Natural killer cell (primary cell): ENCODE measurements at regions of chr4 and their contacts with region 1.

Region 1: DNA sequence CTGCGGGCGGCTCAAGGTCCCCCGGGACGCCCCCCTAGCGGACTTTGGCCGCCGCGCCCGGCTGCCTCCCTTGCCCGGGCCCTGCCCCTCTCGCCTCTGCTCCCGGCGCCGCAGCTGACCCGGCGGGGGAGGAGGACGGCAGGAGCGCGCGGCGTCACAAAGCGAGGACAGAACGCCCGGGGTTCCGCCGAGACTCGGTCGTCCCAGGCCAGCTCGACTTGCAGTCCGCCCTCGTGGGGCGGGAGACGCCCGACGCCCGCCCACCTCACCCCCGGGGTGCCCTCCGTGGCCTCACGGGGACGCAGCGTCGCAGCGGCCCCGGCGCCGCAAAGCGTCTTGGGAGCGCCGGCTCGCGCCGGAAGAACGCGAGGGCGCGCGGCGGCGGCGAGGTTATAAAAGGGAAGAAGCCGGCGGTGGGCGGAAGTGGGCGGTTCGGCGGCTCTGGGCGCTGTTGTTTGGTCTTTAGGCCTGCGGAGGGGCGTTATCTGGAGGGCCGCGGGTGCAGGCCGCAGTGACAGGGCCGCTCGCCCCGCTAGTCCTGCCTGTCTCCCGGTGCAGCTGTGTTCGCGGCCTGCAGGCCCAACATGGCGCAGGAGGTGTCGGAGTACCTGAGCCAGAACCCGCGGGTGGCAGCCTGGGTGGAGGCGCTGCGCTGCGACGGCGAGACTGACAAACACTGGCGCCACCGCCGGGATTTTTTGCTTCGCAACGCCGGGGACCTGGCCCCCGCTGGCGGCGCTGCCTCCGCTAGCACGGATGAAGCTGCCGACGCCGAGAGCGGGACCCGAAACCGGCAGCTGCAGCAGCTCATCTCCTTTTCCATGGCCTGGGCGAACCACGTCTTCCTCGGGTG is at the start of gene CDKN2AIP:
- DNase-seq: peak; percentile 93 to 96
- ATAC-seq: peak; percentile 85 to 94 (median 87)
- H3K4me3 ChIP-seq: peak within 1 kb of the TSS; percentile 60
- H3K4me3 Mint-ChIP-seq: peak within 1 kb of the TSS; percentile 95
- H3K27ac ChIP-seq: peak within 1 kb of the TSS; percentile 87
- H3K27ac Mint-ChIP-seq: peak within 1 kb of the TSS; percentile 95 to 96
- H3K4me1 ChIP-seq: peaks cover 16% of the 10 kb centered on the region
- H3K4me1 Mint-ChIP-seq: peaks cover 43 to 48% of the 10 kb centered on the region in 2 donors
- H3K27me3 ChIP-seq: no peaks in the 10 kb centered on the region
- H3K27me3 Mint-ChIP-seq: no peaks in the 10 kb centered on the region
- CTCF ChIP-seq: no peak
- total RNA-seq, gene CDKN2AIP: 24.2 to 27.3 (median 25.7) TPM

Region 2: GRCh38 chr4:183098723-183099536 is 345.5 kb before region 1 on chr4 and contains the start of gene WWC2:
- intact Hi-C with region 1: loop called (anchors 2 kb)
- DNase-seq: peak; percentile 52 to 80
- ATAC-seq: peak; percentile 64 to 72 (median 72)
- H3K4me3 ChIP-seq: peak within 1 kb of the TSS; percentile 74
- H3K4me3 Mint-ChIP-seq: peak within 1 kb of the TSS; percentile 84
- H3K27ac ChIP-seq: peak within 1 kb of the TSS; percentile 42
- H3K27ac Mint-ChIP-seq: peak within 1 kb of the TSS; percentile 57 to 87
- H3K4me1 ChIP-seq: peaks cover 16% of the 10 kb centered on the region
- H3K4me1 Mint-ChIP-seq: peaks cover 12 to 13% of the 10 kb centered on the region in 2 donors
- H3K27me3 ChIP-seq: peaks cover 3% of the 10 kb centered on the region
- H3K27me3 Mint-ChIP-seq: peaks cover 8 to 15% of the 10 kb centered on the region in 2 donors
- CTCF ChIP-seq: no peak
- total RNA-seq, gene WWC2: 8.2 to 22.7 (median 9.2) TPM

Region 3: DNA sequence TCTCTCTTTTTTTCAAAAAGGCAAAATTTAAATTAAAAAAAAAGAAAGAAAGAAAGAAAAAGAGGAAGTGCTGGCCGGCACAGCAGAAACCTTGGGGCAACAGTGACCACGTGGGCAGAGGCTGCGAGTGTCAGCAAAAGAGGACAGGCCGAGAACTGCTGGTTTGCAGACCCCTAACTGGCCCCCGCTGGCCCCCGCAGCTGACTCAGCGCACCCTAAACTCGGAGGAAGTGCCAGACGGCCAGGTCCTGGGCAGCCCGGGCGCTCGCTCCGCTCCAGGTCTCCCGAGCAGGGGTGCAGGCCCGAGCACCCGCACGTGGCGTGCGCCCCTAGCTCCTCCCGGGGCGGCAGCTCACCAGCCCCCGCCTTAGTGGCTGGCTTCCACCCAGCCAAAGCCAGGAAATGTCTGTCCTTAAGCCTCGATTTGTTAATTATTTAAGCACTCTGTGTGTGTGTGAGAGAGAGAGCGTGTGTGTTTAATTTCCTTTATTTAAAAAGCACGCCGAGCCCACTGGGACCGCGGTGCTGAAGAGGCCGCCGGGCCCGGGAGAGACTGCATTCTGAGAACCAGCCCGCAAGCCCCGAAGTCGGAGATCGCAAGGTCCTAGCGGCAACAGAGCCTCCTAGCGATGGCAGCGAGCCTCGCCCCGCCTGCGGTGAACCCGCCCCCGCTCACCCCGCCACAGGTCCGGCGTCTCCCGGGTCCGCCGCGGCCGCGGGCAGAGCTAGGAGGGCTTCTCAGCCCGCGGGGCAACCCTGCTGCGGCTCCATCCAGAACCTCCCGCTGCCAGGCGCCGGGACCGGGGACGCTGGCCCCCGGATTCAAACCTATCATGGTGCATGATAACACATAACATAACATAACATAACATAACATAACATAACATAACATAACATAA is 46.0 kb before region 1 on chr4:
- intact Hi-C with region 1: no loop called
- DNase-seq: peak; percentile 52 to 79
- ATAC-seq: peak; percentile 83 to 94 (median 92)
- H3K4me3 ChIP-seq: peak overlapping the region; percentile 56
- H3K4me3 Mint-ChIP-seq: peak overlapping the region; percentile 92
- H3K27ac ChIP-seq: peak overlapping the region; percentile 17
- H3K27ac Mint-ChIP-seq: peak overlapping the region in 1 of 2 donors; percentile 86
- H3K4me1 ChIP-seq: peaks cover 15% of the 10 kb centered on the region
- H3K4me1 Mint-ChIP-seq: peaks cover 24 to 28% of the 10 kb centered on the region in 2 donors
- H3K27me3 ChIP-seq: peaks cover 4% of the 10 kb centered on the region
- H3K27me3 Mint-ChIP-seq: peaks cover 30 to 48% of the 10 kb centered on the region in 2 donors
- CTCF ChIP-seq: peak; percentile 37

Region 4: GRCh38 chr4:183504064-183504929 is 59.9 kb after region 1 on chr4:
- intact Hi-C with region 1: loop called (anchors 1 kb)
- DNase-seq: peak; percentile 98 to 100
- ATAC-seq: peak; percentile 79 to 95 (median 84)
- H3K4me3 ChIP-seq: peak overlapping the region; percentile 85
- H3K4me3 Mint-ChIP-seq: peak overlapping the region; percentile 93
- H3K27ac ChIP-seq: peak overlapping the region; percentile 90
- H3K27ac Mint-ChIP-seq: peak overlapping the region; percentile 88 to 92
- H3K4me1 ChIP-seq: peaks cover 3% of the 10 kb centered on the region
- H3K4me1 Mint-ChIP-seq: peaks cover 13 to 20% of the 10 kb centered on the region in 2 donors
- H3K27me3 ChIP-seq: no peaks in the 10 kb centered on the region
- H3K27me3 Mint-ChIP-seq: no peaks in the 10 kb centered on the region
- CTCF ChIP-seq: no peak

Region 5: GRCh38 chr4:183659029-183659871 is 214.8 kb after region 1 on chr4 and contains the starts of genes RWDD4 and TRAPPC11:
- intact Hi-C with region 1: loop called (anchors 1 kb)
- DNase-seq: peak; percentile 95 to 98
- ATAC-seq: peak; percentile 95 to 99 (median 96)
- H3K4me3 ChIP-seq: peak within 1 kb of the TSS; percentile 63
- H3K4me3 Mint-ChIP-seq: peak within 1 kb of the TSS; percentile 87
- H3K27ac ChIP-seq: peak within 1 kb of the TSS; percentile 85
- H3K27ac Mint-ChIP-seq: peak within 1 kb of the TSS; percentile 88 to 89
- H3K4me1 ChIP-seq: peaks cover 15% of the 10 kb centered on the region
- H3K4me1 Mint-ChIP-seq: peaks cover 34 to 37% of the 10 kb centered on the region in 2 donors
- H3K27me3 ChIP-seq: no peaks in the 10 kb centered on the region
- H3K27me3 Mint-ChIP-seq: no peaks in the 10 kb centered on the region
- CTCF ChIP-seq: no peak
- total RNA-seq, gene RWDD4: 14.3 to 20.7 (median 17.6) TPM
- total RNA-seq, gene TRAPPC11: 33.4 to 41.7 (median 36.8) TPM

Region 6: GRCh38 chr4:184136525-184136924 is 692.1 kb after region 1 on chr4:
- intact Hi-C with region 1: no loop called
- DNase-seq: no peak
- ATAC-seq: no peak
- H3K4me3 ChIP-seq: no peak overlapping the region
- H3K4me3 Mint-ChIP-seq: no peak overlapping the region
- H3K27ac ChIP-seq: no peak overlapping the region
- H3K27ac Mint-ChIP-seq: no peak overlapping the region
- H3K4me1 ChIP-seq: no peaks in the 10 kb centered on the region
- H3K4me1 Mint-ChIP-seq: no peaks in the 10 kb centered on the region
- H3K27me3 ChIP-seq: peaks cover 2% of the 10 kb centered on the region
- H3K27me3 Mint-ChIP-seq: peaks cover 6 to 26% of the 10 kb centered on the region in 2 donors
- CTCF ChIP-seq: no peak